ENCODE measurements at regions of chr14 and their contacts with region 1.

Region 1: GRCh38 chr14:51750542-51750941 is 98.8 kb downstream of the FRMD6 start:
- DNase-seq: peak; percentile 52
- ATAC-seq: no peak
- H3K4me3 Mint-ChIP-seq: no peak overlapping the region
- H3K27ac Mint-ChIP-seq: no peak overlapping the region
- H3K4me1 Mint-ChIP-seq: no peaks in the 10 kb centered on the region
- H3K27me3 Mint-ChIP-seq: no peaks in the 10 kb centered on the region
- CTCF ChIP-seq: no peak

Region 2: DNA sequence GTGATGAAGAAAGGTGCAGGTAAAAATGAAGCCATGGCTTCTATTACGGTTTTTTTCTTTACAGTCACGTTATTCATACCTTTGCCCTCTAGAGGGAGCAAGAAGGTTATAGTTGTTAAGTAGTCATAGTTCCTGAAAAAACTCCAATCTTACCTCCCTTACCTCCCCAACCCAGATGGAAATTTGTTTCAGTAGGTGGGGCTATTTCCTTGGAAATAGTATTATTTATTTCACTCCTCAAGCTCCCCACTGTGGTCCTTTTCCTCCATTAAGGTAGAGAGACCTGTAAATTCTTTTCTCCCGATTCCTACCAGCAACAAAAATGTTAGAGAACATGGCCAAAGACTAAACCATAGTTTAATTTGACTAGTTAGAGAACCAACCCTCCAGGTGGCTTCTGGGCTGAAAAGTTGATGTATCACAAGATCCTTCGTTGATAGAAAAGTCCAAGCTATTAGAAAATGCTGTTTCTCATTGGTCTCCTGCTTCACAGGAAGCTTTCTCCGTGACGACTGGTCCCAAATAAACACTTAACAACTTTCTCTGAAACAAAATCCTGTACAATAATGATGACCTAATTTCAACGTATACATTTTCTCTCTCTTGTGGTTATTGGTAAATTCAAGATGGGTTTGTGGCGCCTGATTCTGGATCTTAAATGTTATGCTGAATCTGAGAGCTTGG is 467.0 kb before region 1 on chr14:
- CTCF ChIA-PET with region 1: interaction called, 16 read pairs
- POLR2A ChIA-PET with region 1: no interaction called
- DNase-seq: no peak
- ATAC-seq: peak; percentile 87
- H3K4me3 Mint-ChIP-seq: no peak overlapping the region
- H3K27ac Mint-ChIP-seq: no peak overlapping the region
- H3K4me1 Mint-ChIP-seq: peaks cover 4% of the 10 kb centered on the region; the same call in 1 of the 2 replicates
- H3K27me3 Mint-ChIP-seq: no peaks in the 10 kb centered on the region
- CTCF ChIP-seq: peak; percentile 52

Region 3: GRCh38 chr14:51369814-51370213 is 380.7 kb before region 1 on chr14:
- CTCF ChIA-PET with region 1: interaction called, 21 read pairs
- POLR2A ChIA-PET with region 1: no interaction called
- DNase-seq: peak; percentile 41
- ATAC-seq: peak; percentile 67; the same call in 1 of the 2 replicates
- H3K4me3 Mint-ChIP-seq: no peak overlapping the region
- H3K27ac Mint-ChIP-seq: no peak overlapping the region
- H3K4me1 Mint-ChIP-seq: no peaks in the 10 kb centered on the region
- H3K27me3 Mint-ChIP-seq: no peaks in the 10 kb centered on the region
- CTCF ChIP-seq: peak; percentile 59

Region 4: DNA sequence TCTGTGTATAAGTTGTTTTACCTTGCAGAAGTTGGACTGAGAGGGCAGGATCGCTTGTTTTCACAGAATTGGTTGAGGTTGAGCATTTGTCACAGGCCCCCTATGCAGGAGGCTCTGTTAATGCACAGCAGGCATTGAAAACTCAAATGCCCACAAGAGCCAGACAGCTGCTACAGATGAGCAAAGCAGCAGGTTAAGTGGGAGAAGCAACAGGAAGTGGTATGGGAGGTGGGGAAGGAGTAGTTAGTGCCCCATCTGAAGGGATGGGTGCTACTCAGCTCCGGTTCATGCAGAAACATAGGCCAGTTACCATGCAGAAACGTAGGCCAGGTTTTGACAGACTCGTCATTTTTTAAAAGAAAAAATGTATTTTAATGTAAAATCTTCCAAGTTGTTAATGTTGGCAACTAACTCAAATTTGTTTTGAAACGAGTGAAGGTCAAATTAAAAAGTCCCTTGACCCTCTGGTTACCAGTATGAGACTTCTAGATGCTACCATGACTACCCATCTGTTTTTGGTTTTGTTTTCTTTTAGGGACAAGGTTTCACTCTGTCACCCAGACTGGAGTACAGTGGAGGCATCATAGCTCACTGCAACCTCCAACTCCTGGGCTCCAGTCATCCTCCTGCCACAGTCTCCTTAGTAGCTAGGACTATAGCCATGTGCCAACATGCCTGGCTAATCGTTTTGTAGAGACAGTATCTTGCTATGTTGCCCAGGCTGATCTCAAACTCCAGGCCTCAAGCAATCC is 183.5 kb before region 1 on chr14:
- CTCF ChIA-PET with region 1: no interaction called
- POLR2A ChIA-PET with region 1: no interaction called
- DNase-seq: no peak
- ATAC-seq: no peak; the same call in 1 of the 2 replicates
- H3K4me3 Mint-ChIP-seq: no peak overlapping the region
- H3K27ac Mint-ChIP-seq: no peak overlapping the region
- H3K4me1 Mint-ChIP-seq: peaks cover 32% of the 10 kb centered on the region
- H3K27me3 Mint-ChIP-seq: no peaks in the 10 kb centered on the region
- CTCF ChIP-seq: no peak

Region 5: DNA sequence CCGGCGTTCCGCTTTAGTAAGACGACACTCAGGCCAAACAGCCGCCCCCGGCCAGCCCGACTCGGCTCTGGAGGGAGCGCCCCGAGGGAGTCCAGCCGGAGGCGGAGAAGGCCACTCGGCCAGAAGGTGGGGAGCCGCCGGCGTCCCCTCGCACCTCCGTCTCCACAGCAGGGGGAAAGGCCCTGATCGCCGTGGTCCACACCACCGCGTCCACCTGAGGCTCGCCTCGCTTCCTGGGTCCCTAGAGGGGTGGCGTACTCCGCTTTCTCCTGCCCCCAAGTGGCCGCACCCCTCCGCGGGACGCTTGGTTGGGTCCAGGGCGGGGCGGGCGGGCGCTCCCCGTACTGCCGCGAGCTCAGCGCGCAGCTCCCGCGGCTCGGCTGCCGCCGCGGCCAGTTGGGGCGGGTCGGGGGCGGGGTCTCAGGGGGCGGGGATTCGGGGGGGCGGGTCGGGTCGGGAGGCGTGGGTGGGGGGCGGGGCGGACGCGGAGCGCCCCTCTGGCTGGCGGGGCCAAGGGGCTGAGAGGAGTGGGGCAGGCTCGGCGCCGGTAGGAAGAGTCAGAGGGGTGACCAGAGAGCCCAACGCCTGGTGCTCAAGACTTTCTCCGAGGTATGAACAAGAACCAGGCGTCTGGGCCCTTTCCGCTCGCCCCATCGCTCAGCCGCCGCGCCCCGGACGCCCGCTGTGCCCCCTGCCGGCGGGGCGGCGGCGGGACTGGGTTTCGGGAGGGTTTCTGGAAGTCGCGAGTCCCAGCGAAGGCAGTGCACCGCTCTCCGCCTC is 99.0 kb before region 1 on chr14 and contains the start of gene FRMD6:
- CTCF ChIA-PET with region 1: interaction called, 11 read pairs
- POLR2A ChIA-PET with region 1: no interaction called
- DNase-seq: peak; percentile 89
- ATAC-seq: peak; percentile 80
- H3K4me3 Mint-ChIP-seq: peak within 1 kb of the TSS; percentile 93
- H3K27ac Mint-ChIP-seq: peak within 1 kb of the TSS; percentile 79
- H3K4me1 Mint-ChIP-seq: peaks cover 37% of the 10 kb centered on the region
- H3K27me3 Mint-ChIP-seq: no peaks in the 10 kb centered on the region
- CTCF ChIP-seq: peak; percentile 40; the same call in 1 of the 2 replicates
- total RNA-seq, gene FRMD6: 13.3 to 21.8 TPM (median 17.0 TPM) in 3 replicates

Region 6: DNA sequence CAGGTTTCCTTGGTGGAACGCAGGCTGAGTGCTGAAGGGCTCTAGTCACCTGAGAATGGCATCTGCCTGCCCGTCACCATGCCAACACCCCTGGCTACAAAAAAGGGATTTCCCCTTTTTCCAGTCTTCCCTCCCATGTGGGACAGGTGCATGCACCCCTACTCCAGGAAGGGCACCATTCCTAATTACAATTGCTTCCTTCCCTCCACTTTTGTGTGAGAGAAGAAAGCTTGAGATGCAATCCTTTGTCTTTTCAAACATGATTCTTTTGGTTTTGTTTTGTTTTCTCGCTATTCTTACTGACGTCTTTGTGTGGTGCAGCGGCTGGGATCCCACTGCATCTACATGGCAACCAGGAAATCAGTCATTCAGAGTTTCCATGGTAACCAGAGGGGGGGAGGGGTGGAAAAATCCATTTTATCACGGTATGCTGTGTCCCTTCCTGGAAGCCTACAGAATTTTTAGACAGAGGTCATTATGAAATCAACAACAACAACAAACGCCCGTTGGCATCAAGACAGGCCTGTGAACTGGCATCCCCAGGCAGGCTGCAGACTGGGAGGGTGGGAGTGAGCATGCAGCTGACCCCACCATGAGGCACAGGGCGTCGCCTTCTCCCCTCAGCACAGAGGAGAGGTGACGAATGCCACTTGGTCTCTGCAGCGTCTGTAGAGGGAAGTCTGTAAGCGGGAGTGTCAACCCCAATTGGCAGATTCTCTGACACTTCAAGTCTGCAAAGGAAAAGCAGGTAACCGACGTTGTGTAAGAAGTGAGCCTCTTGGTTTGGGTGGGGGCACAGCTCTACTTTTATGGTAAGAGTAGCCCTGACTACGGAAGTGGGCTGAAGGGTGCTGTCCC is 96.3 kb after region 1 on chr14:
- CTCF ChIA-PET with region 1: no interaction called
- POLR2A ChIA-PET with region 1: no interaction called
- DNase-seq: peak; percentile 65
- ATAC-seq: peak; percentile 86
- H3K4me3 Mint-ChIP-seq: peak overlapping the region; percentile 69
- H3K27ac Mint-ChIP-seq: peak overlapping the region; percentile 77
- H3K4me1 Mint-ChIP-seq: peaks cover 27% of the 10 kb centered on the region
- H3K27me3 Mint-ChIP-seq: no peaks in the 10 kb centered on the region
- CTCF ChIP-seq: no peak

Region 7: DNA sequence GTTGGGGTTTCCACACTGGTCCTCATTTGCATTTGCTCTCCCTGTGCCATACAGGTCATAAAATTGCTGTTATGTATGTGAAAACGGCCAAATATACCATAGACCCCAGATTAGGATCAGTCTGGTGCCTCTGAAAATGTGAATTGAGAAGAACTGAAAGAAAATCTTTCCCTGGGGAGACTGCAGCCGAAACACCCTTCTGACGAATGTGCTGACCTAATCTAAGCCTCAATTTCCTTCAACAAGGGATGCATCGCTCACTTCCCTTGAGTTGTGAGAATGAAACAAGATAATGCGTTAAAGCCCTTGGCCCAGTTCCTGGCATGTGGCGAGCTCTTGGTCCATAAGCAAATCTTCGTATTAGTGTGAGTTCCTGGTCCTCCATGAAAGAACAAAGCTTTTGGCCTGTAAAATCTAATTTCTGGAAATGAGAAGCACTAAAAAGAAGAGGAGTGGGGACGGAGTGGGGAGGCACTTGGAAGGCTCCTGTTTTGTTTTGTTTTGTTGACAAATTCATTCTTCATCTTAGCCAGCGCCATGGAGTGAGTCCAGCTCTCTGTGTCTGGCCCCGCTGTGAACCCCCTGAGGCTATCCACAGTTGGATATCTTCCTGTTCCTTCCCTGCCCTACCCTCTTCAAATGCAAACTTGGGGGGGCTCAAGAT is 189.3 kb after region 1 on chr14:
- CTCF ChIA-PET with region 1: no interaction called
- POLR2A ChIA-PET with region 1: no interaction called
- DNase-seq: no peak
- ATAC-seq: no peak
- H3K4me3 Mint-ChIP-seq: no peak overlapping the region
- H3K27ac Mint-ChIP-seq: no peak overlapping the region
- H3K4me1 Mint-ChIP-seq: peaks cover 16% of the 10 kb centered on the region
- H3K27me3 Mint-ChIP-seq: no peaks in the 10 kb centered on the region
- CTCF ChIP-seq: no peak